Colonic mucosa (tissue), 4 donors: ENCODE measurements at regions of chr2 and their contacts with region 1.

Region 1: DNA sequence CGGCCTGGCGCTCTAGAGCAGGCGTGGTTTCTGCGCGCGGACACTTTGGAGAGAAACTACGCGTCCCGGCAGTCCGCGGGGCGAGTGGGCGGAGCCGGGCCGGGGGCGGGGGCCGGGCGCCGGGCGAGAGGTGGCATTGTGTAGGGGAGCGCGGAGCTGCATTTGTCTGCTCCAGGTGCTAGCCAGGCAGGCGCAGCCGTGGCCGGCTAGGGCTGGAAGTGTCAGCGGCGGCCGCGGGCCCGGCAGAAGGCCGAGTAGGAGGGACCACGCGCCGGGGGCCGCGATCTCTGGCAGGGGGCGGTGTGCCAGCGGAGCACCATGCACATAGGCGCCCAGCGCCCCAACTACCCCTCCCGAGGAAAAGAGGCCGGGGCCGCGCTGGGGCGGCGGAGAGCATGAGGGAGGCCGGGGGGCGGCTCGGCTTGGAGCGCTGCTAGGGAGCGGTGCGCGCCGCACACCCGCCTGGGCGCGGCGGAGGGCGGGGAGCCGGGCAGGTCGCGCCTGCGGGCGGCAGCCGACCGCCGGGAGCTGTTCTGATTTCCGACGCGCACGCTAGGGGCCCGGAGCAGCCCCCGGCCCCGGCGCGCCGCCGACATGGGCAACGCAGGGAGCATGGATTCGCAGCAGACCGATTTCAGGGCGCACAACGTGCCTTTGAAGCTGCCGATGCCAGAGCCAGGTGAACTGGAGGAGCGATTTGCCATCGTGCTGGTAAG is at the start of gene FMNL2:
- DNase-seq: peak; percentile 88
- H3K4me3 ChIP-seq: peak within 1 kb of the TSS; percentile 89
- H3K27ac ChIP-seq: peak within 1 kb of the TSS; percentile 84
- H3K4me1 ChIP-seq: no peaks in the 10 kb centered on the region
- H3K27me3 ChIP-seq: no peaks in the 10 kb centered on the region
- CTCF ChIP-seq: no peak
- total RNA-seq, gene FMNL2: 10.6 to 17.5 TPM

Region 2: DNA sequence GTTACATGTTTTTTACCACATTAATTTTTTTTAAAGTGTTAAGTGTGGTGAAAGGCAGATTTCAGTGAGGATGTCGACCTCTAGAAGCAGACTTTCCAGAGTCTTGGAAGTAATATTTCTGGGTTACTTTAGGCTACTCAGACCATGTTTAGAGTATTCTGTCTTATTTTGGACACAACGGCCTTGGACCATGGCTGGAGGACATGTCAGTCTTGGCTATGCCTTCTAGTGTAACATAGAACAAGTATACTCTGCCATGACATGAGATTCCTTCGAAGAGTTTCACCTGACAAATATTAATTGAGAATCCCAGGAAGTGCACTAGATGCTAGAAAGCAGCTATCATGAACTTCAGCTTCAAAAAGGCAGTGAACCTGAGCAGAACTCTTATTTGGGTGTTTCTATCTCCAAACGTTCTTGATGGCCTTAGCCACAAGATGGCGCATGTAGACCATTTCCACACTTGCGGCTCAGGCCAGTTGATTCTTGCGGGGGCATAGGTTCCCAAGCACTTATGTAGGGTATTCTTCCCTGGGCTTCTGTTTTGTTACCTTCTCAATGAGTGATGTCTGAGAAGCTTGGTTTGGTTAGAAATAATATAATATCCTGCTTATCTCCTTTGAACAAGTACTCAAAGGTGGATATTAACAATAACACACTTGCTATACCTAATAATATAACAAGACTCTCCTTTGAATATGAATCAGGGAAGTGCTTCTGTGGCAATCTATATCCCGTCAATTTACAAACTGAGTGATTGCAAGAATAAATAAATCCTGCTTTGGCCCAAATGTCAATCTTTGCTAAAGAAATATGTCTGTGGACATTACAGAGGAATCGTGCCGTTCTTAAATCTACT is 298.3 kb before region 1 on chr2:
- intact Hi-C with region 1: loop called (anchors 5 kb)
- DNase-seq: peak; percentile 73
- H3K4me3 ChIP-seq: no peak overlapping the region
- H3K27ac ChIP-seq: no peak overlapping the region
- H3K4me1 ChIP-seq: no peaks in the 10 kb centered on the region
- H3K27me3 ChIP-seq: no peaks in the 10 kb centered on the region
- CTCF ChIP-seq: peak; percentile 68

Region 3: GRCh38 chr2:152200562-152201465 is 134.4 kb before region 1 on chr2:
- intact Hi-C with region 1: loop called (anchors 10 kb)
- DNase-seq: peak; percentile 86
- H3K4me3 ChIP-seq: no peak overlapping the region
- H3K27ac ChIP-seq: no peak overlapping the region
- H3K4me1 ChIP-seq: no peaks in the 10 kb centered on the region
- H3K27me3 ChIP-seq: no peaks in the 10 kb centered on the region
- CTCF ChIP-seq: no peak

Region 4: GRCh38 chr2:152367547-152368390 is 32.6 kb after region 1 on chr2:
- intact Hi-C with region 1: no loop called
- DNase-seq: no peak
- H3K4me3 ChIP-seq: no peak overlapping the region
- H3K27ac ChIP-seq: no peak overlapping the region
- H3K4me1 ChIP-seq: no peaks in the 10 kb centered on the region
- H3K27me3 ChIP-seq: no peaks in the 10 kb centered on the region
- CTCF ChIP-seq: no peak

Region 5: DNA sequence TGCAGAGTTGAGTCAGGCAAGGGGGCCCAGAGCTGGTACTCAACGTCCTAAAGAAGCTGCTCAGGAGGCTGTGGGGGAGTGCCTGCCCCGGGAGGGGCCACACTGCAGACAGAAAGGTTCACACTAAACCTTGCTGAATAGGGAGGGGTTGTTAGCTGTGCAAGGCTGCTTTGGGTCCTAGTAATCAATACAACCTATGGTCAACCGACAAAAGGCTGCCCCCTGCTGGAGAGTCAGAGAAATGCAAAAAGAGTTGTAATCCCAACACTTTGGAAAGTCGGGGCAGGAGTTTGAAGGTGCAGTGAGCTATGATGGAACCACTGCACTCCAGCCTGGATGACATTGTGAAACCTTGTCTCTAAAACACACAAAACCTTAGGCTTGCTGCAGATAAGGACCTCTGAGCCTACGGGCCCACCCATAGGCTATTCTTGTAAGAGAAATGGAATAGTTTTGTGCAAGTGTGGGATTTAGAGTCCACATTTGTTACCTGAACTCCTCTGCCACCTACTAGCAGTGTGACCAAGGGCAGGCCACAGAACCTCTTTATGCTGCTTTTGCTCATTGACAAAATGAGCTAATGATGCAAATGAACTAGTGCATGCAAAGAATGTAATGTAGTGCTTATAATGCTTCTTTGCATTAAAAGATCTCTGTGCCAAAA is 300.6 kb after region 1 on chr2:
- intact Hi-C with region 1: loop called (anchors 10 kb)
- DNase-seq: peak; percentile 73
- H3K4me3 ChIP-seq: no peak overlapping the region
- H3K27ac ChIP-seq: no peak overlapping the region
- H3K4me1 ChIP-seq: no peaks in the 10 kb centered on the region
- H3K27me3 ChIP-seq: no peaks in the 10 kb centered on the region
- CTCF ChIP-seq: peak; percentile 80